Endothelial cell of umbilical vein (primary cell): ENCODE measurements at regions of chr19 and their contacts with region 1.

Region 1: DNA sequence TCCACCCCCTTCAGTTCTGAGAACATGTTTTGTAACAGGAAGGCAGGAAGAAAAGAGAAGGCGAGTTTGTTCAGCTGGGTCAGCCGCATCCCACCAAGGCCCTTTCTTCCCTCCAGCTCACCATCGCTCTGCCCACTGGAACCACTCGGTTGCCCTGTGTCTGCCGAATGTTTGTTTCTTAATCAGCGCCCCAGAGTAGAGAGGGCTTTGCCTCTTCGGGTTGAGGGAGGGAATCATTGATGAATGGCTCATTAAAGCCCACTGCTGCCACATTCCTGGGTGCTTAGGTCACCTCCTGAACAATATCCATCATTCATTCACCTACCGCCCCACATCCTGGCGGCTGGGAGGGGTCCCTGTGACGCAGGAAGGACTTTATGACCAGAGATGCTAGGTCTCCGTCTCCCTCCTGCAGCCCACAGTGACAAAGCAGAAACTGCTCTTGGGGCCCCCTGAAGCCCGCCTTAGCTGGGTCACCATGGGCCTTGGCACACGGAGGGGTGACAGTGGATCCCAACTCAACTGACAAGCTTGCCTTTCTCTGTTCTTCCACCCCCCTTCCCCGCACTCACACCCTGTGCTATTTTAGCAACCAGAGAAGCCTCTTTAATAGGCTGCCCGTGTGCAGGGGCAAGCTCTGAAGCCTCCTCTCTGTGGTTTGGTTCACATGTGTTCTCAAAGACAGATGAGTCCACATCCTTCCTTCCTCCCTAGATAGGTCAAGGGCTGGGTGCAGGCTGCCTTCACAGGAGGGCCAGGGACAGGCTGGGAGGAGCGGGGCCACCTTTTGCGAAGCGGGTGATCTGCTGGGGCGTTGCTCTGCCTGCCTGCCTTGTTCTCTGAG is 46.2 kb downstream of the ACTN4 start:
- DNase-seq: peak; percentile 85
- H3K4me3 ChIP-seq: no peak overlapping the region
- H3K27ac ChIP-seq: peak overlapping the region; percentile 99
- H3K4me1 ChIP-seq: peaks cover 37% of the 10 kb centered on the region
- H3K27me3 ChIP-seq: no peaks in the 10 kb centered on the region
- CTCF ChIP-seq: no peak
- POLR2A ChIP-seq: peak; percentile 61

Region 2: DNA sequence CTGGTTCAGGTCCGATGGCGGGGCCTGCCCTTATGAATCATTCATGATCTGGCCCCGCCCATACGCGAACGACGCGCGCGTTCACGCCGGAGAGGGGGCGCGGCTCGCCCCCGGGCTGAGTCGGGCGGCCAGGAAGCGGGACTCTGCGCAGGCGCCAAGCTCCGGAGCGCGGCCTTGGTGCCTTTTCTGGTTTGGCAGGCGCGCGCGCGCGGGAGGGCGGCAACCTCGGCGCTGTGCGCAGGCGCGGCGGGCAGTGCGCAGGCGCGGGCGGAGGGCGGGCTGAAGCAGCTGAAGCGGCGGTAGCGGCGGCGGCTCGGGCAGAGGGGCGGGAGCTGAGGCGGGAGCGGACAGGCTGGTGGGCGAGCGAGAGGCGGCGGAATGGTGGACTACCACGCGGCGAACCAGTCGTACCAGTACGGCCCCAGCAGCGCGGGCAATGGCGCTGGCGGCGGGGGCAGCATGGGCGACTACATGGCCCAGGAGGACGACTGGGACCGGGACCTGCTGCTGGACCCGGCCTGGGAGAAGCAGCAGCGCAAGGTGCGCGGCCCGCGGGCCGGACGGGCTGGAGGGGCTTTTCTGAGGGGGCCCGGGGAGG is 46.1 kb before region 1 on chr19 and contains the start of gene ACTN4:
- CTCF ChIA-PET with region 1: interaction called, 3 read pairs
- POLR2A ChIA-PET with region 1: interaction called, 17 read pairs
- dilution Hi-C with region 1: no loop called
- intact Hi-C with region 1: loop called (anchors 1 kb)
- DNase-seq: peak; percentile 98
- H3K4me3 ChIP-seq: peak within 1 kb of the TSS; percentile 96 to 99 (median 98)
- H3K27ac ChIP-seq: peak within 1 kb of the TSS; percentile 70
- H3K4me1 ChIP-seq: peaks cover 28% of the 10 kb centered on the region
- H3K27me3 ChIP-seq: no peaks in the 10 kb centered on the region
- CTCF ChIP-seq: no peak
- POLR2A ChIP-seq: peak; percentile 97
- total RNA-seq, gene ACTN4: 693 and 748 TPM in 2 replicates

Region 3: DNA sequence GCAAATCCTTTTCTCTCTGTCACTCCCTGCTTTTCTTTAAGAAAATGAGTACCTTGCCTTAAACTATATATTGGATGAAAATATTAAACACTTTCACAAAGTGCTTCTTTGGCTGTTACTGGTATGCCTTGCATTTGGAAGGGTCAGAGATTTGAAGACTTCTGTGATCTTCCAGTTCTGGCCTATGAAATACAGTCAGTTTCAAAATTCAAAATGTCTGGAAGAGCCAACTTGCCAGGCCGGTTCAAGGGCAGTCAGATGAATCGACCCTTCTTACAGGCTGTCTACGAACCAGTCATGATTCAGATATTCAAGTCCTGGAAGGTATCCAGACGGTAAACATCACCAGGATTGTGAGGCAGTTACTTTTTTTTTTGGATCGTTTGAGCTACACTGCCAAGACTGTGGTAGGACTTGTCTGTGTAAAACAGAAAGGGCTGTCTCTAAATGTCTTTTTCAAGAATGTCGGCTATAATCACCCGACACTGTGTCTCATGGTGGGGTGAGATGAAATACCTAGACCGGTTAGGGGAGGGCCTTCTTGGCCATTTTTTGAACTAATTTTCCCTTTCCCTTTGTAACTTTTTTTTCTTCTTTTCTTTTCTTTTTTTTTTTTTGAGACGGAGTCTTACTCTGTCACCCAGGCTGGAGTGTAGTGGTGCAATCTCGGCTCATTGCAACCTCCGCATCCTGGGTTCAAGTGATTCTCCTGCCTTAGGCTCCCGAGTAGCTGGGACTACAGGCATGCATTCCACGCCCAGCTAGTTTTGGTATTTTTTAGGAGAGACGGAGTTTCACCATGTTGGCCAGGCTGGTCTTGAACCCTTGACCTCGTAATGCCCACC is 34.9 kb before region 1 on chr19:
- CTCF ChIA-PET with region 1: interaction called, 6 read pairs
- POLR2A ChIA-PET with region 1: interaction called, 4 read pairs
- dilution Hi-C with region 1: no loop called
- intact Hi-C with region 1: loop called (anchors 2 kb)
- DNase-seq: peak; percentile 98
- H3K4me3 ChIP-seq: no peak overlapping the region
- H3K27ac ChIP-seq: peak overlapping the region; percentile 87
- H3K4me1 ChIP-seq: peaks cover 66% of the 10 kb centered on the region
- H3K27me3 ChIP-seq: no peaks in the 10 kb centered on the region
- CTCF ChIP-seq: no peak
- POLR2A ChIP-seq: no peak

Region 4: DNA sequence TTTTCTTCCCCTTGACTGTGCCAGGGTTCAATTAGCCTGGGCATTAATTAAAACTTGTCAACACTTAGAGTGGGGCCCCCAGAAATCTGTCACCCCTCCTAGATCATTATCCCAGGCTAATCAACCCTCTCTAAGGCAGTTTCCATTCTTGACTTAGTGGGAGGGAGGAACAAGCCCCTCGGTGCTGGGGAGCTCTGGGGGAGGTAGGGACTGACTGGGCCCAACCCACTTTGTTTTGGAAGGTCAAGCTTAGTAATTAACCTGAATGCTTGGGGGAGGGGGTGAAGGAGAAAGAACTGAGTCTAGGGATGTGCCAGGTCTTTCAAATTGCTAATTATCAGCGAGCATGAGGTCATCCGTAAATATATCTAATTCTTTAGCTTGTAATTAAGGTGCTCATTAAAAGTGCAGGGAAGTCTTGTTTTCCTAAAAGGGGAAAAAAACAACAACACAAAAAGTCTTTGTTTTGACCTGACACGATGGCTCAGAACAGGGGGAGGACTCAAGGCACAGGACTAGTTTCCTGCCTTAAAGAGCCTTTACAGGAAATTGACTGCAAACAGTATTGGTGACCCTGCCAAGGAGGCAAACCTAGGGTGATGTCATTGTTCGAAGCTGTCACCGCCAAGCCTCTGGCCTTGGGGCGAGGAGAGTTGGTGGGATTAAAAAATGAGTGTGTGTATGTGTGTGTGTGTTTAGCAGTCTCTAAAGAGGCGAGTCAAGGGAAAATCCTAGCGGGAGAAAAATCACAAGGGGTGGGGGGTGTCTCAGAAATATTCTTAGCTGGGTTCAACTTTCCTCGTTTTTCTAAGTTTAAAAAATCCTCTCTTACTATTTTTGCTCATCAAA is 26.7 kb before region 1 on chr19:
- CTCF ChIA-PET with region 1: interaction called, 3 read pairs
- POLR2A ChIA-PET with region 1: no interaction called
- dilution Hi-C with region 1: no loop called
- intact Hi-C with region 1: loop called (anchors 1 kb)
- DNase-seq: peak; percentile 90
- H3K4me3 ChIP-seq: peak overlapping the region in 1 of 3 experiments; percentile 5
- H3K27ac ChIP-seq: peak overlapping the region; percentile 95
- H3K4me1 ChIP-seq: peaks cover 82% of the 10 kb centered on the region
- H3K27me3 ChIP-seq: no peaks in the 10 kb centered on the region
- CTCF ChIP-seq: no peak
- POLR2A ChIP-seq: peak; percentile 12

Region 5: GRCh38 chr19:38683393-38684080 is 10.1 kb before region 1 on chr19:
- CTCF ChIA-PET with region 1: interaction called, 3 read pairs
- POLR2A ChIA-PET with region 1: interaction called, 3 read pairs
- dilution Hi-C with region 1: no loop called
- intact Hi-C with region 1: loop called (anchors 1 kb)
- DNase-seq: peak; percentile 89
- H3K4me3 ChIP-seq: no peak overlapping the region
- H3K27ac ChIP-seq: peak overlapping the region; percentile 90
- H3K4me1 ChIP-seq: peaks cover 66% of the 10 kb centered on the region
- H3K27me3 ChIP-seq: no peaks in the 10 kb centered on the region
- CTCF ChIP-seq: no peak
- POLR2A ChIP-seq: no peak

Region 6: DNA sequence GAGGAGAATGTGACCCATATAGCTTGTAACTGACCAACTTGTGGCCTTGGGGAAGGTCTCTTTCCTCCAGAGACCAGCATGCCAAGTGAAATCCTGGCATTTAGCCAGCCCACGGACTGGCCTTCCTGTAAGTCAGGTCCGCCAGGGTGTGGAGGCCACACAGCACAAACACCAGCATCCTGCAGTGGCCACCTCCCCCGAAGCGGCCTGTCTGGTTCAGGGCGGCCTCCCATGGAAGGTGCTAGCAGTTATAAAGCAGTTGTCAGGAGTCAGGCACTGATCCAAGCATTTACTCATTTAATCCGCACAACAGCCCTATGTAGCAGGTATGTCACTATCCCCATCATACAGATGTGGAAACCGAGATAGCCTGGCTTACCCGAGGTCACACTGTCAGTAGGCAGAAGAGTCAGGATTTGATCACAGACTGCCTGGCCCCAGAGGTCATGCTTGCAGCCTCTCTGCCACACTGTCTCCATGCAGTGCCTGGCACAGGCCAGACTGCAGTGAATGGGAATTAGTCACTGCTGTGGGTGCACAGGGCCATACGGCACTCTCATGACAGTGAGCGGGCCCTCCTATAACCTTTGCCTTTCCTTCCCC is 14.0 kb after region 1 on chr19:
- CTCF ChIA-PET with region 1: interaction called, 3 read pairs
- POLR2A ChIA-PET with region 1: no interaction called
- dilution Hi-C with region 1: no loop called
- intact Hi-C with region 1: loop called (anchors 2 kb)
- DNase-seq: peak; percentile 91
- H3K4me3 ChIP-seq: no peak overlapping the region
- H3K27ac ChIP-seq: peak overlapping the region; percentile 47
- H3K4me1 ChIP-seq: peaks cover 30% of the 10 kb centered on the region
- H3K27me3 ChIP-seq: no peaks in the 10 kb centered on the region
- CTCF ChIP-seq: no peak
- POLR2A ChIP-seq: peak; percentile 70